HCT116 (cell line): ENCODE measurements at regions of chr5 and their contacts with region 1.

Region 1: GRCh38 chr5:32174011-32174870 is at the start of gene GOLPH3:
- DNase-seq: peak; percentile 61
- ATAC-seq: peak; percentile 86
- H3K4me3 ChIP-seq: peak within 1 kb of the TSS; percentile 70 to 93
- H3K27ac ChIP-seq: peak within 1 kb of the TSS; percentile 100
- H3K4me1 ChIP-seq: peaks cover 18 to 38% of the 10 kb centered on the region in 2 experiments
- H3K27me3 ChIP-seq: no peaks in the 10 kb centered on the region
- CTCF ChIP-seq: no peak
- POLR2A ChIP-seq: peak; percentile 82
- RAD21 ChIP-seq: no peak
- total RNA-seq, gene GOLPH3: 69.2 TPM

Region 2: GRCh38 chr5:32312647-32313523 is 138.6 kb after region 1 on chr5 and contains the start of gene MTMR12:
- CTCF ChIA-PET with region 1: no interaction called
- POLR2A ChIA-PET with region 1: no interaction called
- RAD21 ChIA-PET with region 1: no interaction called
- intact Hi-C with region 1: loop called (anchors 1 kb)
- DNase-seq: peak; percentile 98
- ATAC-seq: peak; percentile 94
- H3K4me3 ChIP-seq: peak within 1 kb of the TSS; percentile 81 to 84
- H3K27ac ChIP-seq: peak within 1 kb of the TSS; percentile 87
- H3K4me1 ChIP-seq: peaks cover 6 to 13% of the 10 kb centered on the region in 2 experiments; a peak in 2 of 4 replicates
- H3K27me3 ChIP-seq: no peaks in the 10 kb centered on the region
- CTCF ChIP-seq: no peak
- POLR2A ChIP-seq: peak; percentile 71
- RAD21 ChIP-seq: no peak
- total RNA-seq, gene MTMR12: 27.3 TPM

Region 3: GRCh38 chr5:32329308-32329834 is 155.1 kb after region 1 on chr5:
- CTCF ChIA-PET with region 1: no interaction called
- POLR2A ChIA-PET with region 1: no interaction called
- RAD21 ChIA-PET with region 1: no interaction called
- intact Hi-C with region 1: loop called (anchors 5 kb)
- DNase-seq: peak; percentile 54
- ATAC-seq: peak; percentile 90
- H3K4me3 ChIP-seq: no peak overlapping the region
- H3K27ac ChIP-seq: no peak overlapping the region
- H3K4me1 ChIP-seq: peaks cover 11 to 25% of the 10 kb centered on the region in 2 experiments
- H3K27me3 ChIP-seq: no peaks in the 10 kb centered on the region
- CTCF ChIP-seq: peak; percentile 67 to 79 (median 77)
- POLR2A ChIP-seq: no peak
- RAD21 ChIP-seq: peak; percentile 86

Region 4: GRCh38 chr5:32726086-32726557 is 551.9 kb after region 1 on chr5:
- CTCF ChIA-PET with region 1: no interaction called
- POLR2A ChIA-PET with region 1: no interaction called
- RAD21 ChIA-PET with region 1: no interaction called
- intact Hi-C with region 1: no loop called
- DNase-seq: no peak
- ATAC-seq: no peak
- H3K4me3 ChIP-seq: no peak overlapping the region
- H3K27ac ChIP-seq: no peak overlapping the region
- H3K4me1 ChIP-seq: no peaks in the 10 kb centered on the region
- H3K27me3 ChIP-seq: no peaks in the 10 kb centered on the region
- CTCF ChIP-seq: no peak
- POLR2A ChIP-seq: no peak
- RAD21 ChIP-seq: no peak